ENCODE measurements at regions of chr12 and their contacts with region 1.

Region 1: GRCh38 chr12:64759035-64759901 is at the start of gene GNS:
- DNase-seq: peak; percentile 98
- H3K4me3 ChIP-seq: peak within 1 kb of the TSS; percentile 85 to 91 (median 88)
- H3K27ac ChIP-seq: peak within 1 kb of the TSS; percentile 84 to 92 (median 88)
- H3K4me1 ChIP-seq: peaks cover 0 to 25% (median 11%) of the 10 kb centered on the region in 4 donors
- H3K27me3 ChIP-seq: no peaks in the 10 kb centered on the region
- CTCF ChIP-seq: no peak
- EP300 ChIP-seq: peak in 1 of 4 donors; percentile 2
- POLR2A ChIP-seq: no peak
- total RNA-seq, gene GNS: 65.3 to 73.0 (median 70.5) TPM

Region 2: DNA sequence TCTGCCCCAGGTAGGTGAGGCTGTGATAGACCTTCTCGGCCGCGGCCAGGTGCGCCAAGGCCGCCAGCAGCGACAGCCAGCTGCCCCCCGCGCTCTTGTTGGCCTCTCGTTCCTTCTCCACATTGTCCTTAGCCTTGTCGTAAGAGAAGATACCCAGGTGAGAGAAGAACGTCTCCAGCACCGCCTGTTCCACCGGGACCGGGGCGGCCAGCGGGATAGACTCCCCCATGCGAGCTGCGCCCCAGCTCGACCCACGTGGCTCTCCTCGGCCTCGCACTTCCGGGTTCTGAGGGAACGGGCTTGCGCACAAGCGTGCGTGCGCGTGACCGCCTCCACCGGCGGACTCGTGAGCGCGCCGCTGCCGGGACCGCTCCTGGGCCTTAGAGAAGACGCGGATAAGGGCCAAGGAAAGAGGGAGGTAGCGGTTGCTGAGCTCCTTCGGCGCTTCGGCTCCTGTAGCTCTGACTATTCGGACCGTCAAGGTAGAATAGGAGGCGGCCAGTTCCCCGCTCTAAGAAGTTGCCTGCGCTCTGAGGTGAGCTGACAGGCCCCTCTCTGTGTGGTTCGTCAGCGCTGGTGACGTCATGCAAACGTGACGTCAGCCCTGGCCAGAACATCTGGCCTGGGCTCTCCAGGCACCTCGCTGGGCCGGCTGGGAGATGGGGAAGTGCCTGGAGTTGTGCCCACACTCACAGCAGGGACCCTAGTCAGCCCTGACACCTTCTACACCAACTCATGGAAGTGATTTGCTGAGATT is 537.1 kb before region 1 on chr12 and contains the start of gene KICS2:
- intact Hi-C with region 1: loop called (anchors 10 kb)
- DNase-seq: peak; percentile 96
- H3K4me3 ChIP-seq: peak within 1 kb of the TSS; percentile 71 to 92 (median 80)
- H3K27ac ChIP-seq: peak within 1 kb of the TSS; percentile 90 to 93 (median 91)
- H3K4me1 ChIP-seq: peaks cover 0 to 10% (median 4%) of the 10 kb centered on the region in 4 donors
- H3K27me3 ChIP-seq: no peaks in the 10 kb centered on the region
- CTCF ChIP-seq: no peak
- EP300 ChIP-seq: no peak
- POLR2A ChIP-seq: peak; percentile 74 to 84
- total RNA-seq, gene KICS2: 3.6 to 10.7 (median 7.7) TPM

Region 3: DNA sequence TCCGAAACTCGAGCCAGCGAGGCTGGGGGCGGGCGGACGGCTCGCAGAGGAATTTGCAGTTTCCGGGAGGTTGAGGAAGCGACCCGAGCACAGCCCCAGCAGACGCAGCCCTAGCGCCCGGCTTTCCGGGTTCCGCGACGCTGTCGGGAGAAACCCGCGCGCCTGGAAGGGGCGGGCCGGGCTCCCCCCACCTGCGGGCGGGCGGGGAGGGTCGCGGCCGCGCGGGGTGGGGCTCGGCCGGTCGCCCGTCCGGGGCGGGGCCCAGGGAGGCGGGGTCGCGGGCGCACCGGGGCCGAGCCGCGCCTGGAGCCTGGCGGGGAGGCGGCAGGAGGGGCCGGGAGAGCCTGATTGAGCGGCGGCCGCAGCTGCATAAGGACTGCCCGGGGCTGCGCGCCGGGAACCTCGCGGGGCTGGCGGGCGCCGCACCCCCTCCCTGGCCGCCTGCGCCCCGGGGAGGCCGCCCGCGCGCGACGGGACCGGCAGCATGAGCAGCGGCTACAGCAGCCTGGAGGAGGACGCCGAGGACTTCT is 149.1 kb before region 1 on chr12 and contains the start of gene RASSF3:
- intact Hi-C with region 1: loop called (anchors 5 kb)
- DNase-seq: peak; percentile 80
- H3K4me3 ChIP-seq: peak within 1 kb of the TSS; percentile 73 to 90 (median 78)
- H3K27ac ChIP-seq: peak within 1 kb of the TSS; percentile 87 to 92 (median 91)
- H3K4me1 ChIP-seq: peaks cover 0 to 31% (median 23%) of the 10 kb centered on the region in 4 donors
- H3K27me3 ChIP-seq: no peaks in the 10 kb centered on the region
- CTCF ChIP-seq: no peak
- EP300 ChIP-seq: no peak
- POLR2A ChIP-seq: no peak
- total RNA-seq, gene RASSF3: 143 to 348 (median 203) TPM